AG04449 (cell line): ENCODE measurements at regions of chr7 and their contacts with region 1.

Region 1: GRCh38 chr7:129825496-129826267 is 127.1 kb downstream of the UBE2H start:
- DNase-seq: no peak
- H3K4me3 ChIP-seq: peak overlapping the region; percentile 74
- CTCF ChIP-seq: peak; percentile 75

Region 2: DNA sequence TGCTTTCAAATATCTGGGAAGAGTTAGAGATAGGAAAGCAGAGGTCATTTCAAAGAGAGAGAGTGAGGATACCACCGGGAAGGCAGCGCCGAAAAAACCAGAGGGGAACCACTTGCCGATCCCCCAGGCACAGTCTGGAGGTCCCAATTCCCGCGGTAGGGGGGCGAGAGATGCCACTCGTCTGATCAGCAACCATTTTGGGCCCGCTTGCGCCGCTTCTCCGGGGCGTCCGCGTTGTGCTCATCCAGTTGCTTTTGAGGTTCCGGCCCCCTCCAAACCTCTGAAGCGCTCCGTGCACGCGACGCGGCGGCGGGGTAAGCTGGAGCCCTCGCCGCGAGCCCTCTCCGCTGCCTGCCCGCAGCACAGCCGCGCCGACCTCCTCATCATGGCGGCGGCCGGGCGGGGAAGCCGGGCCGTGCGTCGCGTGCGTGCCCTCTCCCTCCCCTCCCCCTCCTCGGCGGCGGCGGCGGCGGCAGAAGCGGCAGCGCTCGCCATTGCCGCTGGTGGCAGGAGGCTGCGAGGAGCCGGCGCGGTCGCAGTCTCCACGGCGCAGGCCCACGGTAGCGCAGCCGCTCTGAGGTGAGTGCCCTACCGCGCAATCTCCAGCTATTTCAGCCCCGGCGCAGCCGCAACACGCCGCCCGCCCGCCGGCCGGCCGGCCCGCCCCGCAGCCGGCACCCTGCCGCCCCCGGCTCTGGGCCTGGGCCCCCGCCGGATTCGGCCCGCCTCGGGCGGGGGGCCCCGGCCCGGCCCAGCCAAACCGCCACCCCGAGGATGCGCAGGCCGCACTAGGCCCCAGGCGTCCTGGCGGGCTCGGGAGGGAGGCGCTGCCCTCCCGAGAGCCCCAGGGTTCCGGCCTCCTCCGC is 214.2 kb before region 1 on chr7 and contains the start of gene NRF1:
- CTCF ChIA-PET with region 1: interaction called, 10 read pairs
- POLR2A ChIA-PET with region 1: no interaction called
- DNase-seq: peak; percentile 19
- H3K4me3 ChIP-seq: peak within 1 kb of the TSS; percentile 81
- CTCF ChIP-seq: peak; percentile 43

Region 3: GRCh38 chr7:129657363-129657762 is 168.3 kb before region 1 on chr7:
- CTCF ChIA-PET with region 1: interaction called, 22 read pairs
- POLR2A ChIA-PET with region 1: interaction called, 3 read pairs
- DNase-seq: no peak
- H3K4me3 ChIP-seq: no peak overlapping the region
- CTCF ChIP-seq: no peak

Region 4: DNA sequence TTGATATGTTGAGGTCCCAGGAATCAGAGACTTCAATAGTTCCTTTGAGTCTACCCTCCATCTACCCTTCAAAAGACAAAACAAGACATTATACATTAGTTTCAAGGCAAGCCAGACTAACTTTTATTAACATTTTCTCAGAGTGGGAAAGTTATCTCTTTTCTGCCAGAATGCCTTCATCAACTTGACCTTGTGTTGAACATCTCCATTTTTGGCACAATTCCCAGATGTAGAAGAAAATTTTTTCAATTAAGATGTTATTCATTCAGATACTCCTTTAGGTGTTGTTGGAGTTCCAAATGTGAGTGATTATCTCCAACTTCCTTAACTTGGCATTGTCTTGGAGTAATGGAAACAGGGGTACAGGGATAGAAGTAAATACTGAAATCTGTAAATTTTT is 155.0 kb before region 1 on chr7:
- CTCF ChIA-PET with region 1: interaction called, 162 read pairs
- POLR2A ChIA-PET with region 1: no interaction called
- DNase-seq: no peak
- H3K4me3 ChIP-seq: no peak overlapping the region
- CTCF ChIP-seq: no peak

Region 5: DNA sequence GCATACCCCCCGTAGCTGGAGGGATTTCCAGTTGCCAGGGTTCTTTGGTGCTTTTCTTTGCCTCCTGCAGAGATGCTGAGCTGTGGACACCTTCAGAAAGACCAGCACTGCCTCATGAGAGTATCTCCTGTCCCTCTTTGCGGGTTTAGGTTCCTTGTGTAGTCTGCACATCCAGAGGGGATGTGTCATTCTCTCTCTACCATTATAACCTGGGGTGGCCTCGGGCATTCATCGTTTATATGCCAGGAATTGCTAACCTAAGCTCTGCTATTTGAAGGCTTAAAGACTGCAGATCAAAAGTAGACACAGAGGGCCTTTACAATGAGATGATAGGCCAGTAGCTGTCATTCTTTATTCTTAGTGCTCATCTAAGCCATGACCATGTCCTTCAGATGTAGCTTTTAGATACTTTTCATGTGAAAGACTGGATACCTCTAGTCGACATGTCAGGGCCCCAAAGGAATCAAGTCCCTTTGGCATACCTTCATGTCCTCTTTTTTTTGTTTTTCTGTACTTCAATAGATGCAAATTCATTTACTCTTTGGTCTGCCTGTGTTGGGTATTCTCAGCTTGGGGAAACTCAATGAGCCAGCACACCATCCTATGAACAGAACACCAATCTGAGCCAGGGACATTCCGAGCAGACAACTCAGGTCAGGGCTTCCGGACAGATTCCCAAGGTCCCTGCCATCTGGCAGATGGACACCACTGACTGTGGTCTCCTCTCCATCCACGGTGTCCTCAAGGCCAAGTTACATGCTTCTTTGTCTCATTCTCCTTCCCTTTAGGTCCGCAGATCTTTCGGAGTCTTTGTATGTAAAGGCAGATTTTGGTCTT is 84.9 kb before region 1 on chr7:
- CTCF ChIA-PET with region 1: no interaction called
- POLR2A ChIA-PET with region 1: no interaction called
- DNase-seq: no peak
- H3K4me3 ChIP-seq: no peak overlapping the region
- CTCF ChIP-seq: no peak

Region 6: DNA sequence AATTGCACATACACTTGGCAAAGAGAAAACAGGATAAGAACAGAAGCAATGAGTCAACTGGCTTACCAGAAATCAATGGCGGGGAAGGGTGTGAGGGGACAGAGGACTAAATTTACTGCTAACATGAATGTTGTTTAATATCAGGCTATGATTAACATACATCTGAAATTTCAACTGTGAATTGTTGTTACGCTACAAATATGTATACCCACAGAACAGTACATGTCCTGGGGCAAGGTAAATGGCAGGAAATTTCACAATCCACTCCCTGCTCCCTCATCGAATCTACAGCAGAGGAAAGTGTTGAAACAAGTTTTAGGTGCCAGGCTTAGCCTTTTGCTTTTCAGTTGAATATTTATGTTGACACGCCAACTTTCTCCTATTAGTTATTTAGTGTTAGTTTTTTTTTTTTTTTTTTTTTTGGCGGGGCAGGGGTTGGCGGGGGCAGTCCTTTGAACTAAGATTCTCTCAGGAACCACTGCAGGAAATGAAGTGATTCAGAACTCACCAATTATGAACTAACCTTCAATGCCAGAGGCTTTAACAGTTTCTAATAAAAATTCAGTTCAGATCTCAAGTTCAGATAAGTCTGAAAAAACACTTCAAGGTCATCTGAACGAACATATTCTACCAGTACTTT is 28.1 kb after region 1 on chr7:
- CTCF ChIA-PET with region 1: interaction called, 16 read pairs
- POLR2A ChIA-PET with region 1: no interaction called
- DNase-seq: no peak
- H3K4me3 ChIP-seq: no peak overlapping the region
- CTCF ChIP-seq: no peak

Region 7: GRCh38 chr7:129952653-129953560 is 127.2 kb after region 1 on chr7 and contains the start of gene UBE2H:
- CTCF ChIA-PET with region 1: interaction called, 34 read pairs
- POLR2A ChIA-PET with region 1: interaction called, 3 read pairs
- DNase-seq: peak; percentile 37
- H3K4me3 ChIP-seq: peak within 1 kb of the TSS; percentile 91
- CTCF ChIP-seq: no peak

Region 8: GRCh38 chr7:130010689-130011412 is 185.2 kb after region 1 on chr7:
- CTCF ChIA-PET with region 1: interaction called, 202 read pairs
- POLR2A ChIA-PET with region 1: no interaction called
- DNase-seq: peak; percentile 45
- H3K4me3 ChIP-seq: no peak overlapping the region; the same call in 1 of the 2 replicates
- CTCF ChIP-seq: peak; percentile 82

Region 9: DNA sequence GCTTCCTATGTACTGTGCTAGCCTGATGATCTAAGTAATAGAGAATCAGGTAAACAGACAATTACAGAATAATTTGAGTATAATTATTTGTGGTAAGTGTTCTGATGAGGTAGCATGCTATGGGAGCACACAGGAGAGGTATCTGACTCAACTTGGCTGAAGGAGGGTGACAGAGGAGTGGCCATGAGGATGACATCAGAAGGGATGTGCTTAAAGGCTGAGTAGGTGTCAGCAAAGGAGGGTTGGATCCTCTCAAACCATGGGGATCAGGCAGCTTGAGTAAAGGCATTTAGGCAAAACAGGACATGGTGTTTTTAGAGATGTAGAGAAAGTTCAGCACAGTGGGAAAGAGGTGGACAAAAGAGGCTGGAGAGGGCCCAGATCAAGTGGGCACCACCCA is 273.6 kb after region 1 on chr7:
- CTCF ChIA-PET with region 1: no interaction called
- POLR2A ChIA-PET with region 1: no interaction called
- DNase-seq: no peak
- H3K4me3 ChIP-seq: no peak overlapping the region
- CTCF ChIP-seq: no peak

Region 10: GRCh38 chr7:130486114-130486958 is 660.7 kb after region 1 on chr7:
- CTCF ChIA-PET with region 1: no interaction called
- POLR2A ChIA-PET with region 1: no interaction called
- DNase-seq: no peak
- H3K4me3 ChIP-seq: no peak overlapping the region
- CTCF ChIP-seq: no peak